Activated CD4-positive, alpha-beta memory T cell treated with anti-CD3 and anti-CD28 coated beads for 36 hours (primary cell): ENCODE measurements at regions of chrX and their contacts with region 1.

Region 1: GRCh38 chrX:9163214-9163681 is 129.3 kb upstream of the FAM9B start:
- DNase-seq: no peak
- H3K4me3 Mint-ChIP-seq: no peak overlapping the region
- H3K27ac Mint-ChIP-seq: peak overlapping the region; percentile 33
- H3K4me1 Mint-ChIP-seq: peaks cover 44% of the 10 kb centered on the region
- H3K27me3 Mint-ChIP-seq: no peaks in the 10 kb centered on the region

Region 2: GRCh38 chrX:9003041-9003440 is 160.2 kb before region 1 on chrX:
- CTCF ChIA-PET with region 1: no interaction called
- POLR2A ChIA-PET with region 1: no interaction called
- intact Hi-C with region 1: loop called (anchors 10 kb)
- DNase-seq: no peak
- H3K4me3 Mint-ChIP-seq: no peak overlapping the region
- H3K27ac Mint-ChIP-seq: no peak overlapping the region
- H3K4me1 Mint-ChIP-seq: peaks cover 21% of the 10 kb centered on the region
- H3K27me3 Mint-ChIP-seq: no peaks in the 10 kb centered on the region